A673 (cell line): ENCODE measurements at regions of chr12 and their contacts with region 1.

Region 1: DNA sequence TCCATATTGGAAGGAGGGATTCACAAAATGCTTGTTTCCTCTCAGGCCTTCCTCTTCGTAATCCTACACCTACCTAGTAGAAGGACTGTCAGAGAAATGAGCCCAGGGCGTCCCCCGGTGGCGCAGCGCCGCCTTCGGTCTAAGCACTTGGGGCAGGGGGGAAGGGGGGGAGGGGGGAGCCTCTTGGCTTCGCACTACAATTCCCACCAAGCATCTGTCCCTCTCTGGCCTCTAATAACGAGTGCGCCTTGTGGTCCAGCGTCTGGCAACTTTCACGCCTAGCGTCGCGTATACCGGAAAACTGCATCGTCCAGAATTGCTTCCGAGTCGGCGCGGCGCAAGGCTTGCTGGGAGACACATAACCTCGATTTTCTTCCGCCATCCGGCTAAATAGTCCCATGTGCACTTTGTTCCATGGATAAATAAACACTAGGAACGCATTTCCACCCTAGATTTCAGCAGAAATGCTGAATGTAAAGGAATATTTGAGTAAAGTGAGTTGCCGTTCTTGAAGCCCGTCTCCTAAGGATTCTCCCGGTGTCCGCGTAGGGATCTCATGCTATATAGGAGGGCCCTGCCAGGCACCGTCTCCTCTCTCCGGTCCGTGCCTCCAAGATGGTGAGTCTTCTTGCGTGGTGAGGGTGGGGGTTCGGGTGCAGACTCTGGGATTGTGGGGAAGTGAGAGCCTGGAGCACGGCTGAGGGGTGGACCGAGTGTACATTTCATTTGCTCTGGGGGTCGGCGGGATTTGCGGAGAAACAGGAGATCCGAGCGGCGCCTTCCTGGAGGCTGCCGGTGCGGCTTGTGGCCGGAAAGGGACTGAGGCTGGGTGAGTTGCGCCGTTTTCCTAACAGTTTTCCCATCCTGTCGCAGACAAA is at the start of gene RPS26:
- DNase-seq: peak; percentile 100
- H3K4me3 ChIP-seq: peak within 1 kb of the TSS; percentile 73
- H3K27ac ChIP-seq: peak within 1 kb of the TSS; percentile 97
- H3K4me1 ChIP-seq: peaks cover 40% of the 10 kb centered on the region
- H3K27me3 ChIP-seq: no peaks in the 10 kb centered on the region
- CTCF ChIP-seq: peak; percentile 56
- total RNA-seq, gene RPS26: 51.9 and 69.9 TPM in 2 replicates

Region 2: GRCh38 chr12:54134850-54135249 is 1906.9 kb before region 1 on chr12:
- CTCF ChIA-PET with region 1: no interaction called
- POLR2A ChIA-PET with region 1: interaction called, 11 read pairs
- intact Hi-C with region 1: no loop called
- DNase-seq: no peak
- H3K4me3 ChIP-seq: no peak overlapping the region
- H3K27ac ChIP-seq: no peak overlapping the region
- H3K4me1 ChIP-seq: peaks cover 4% of the 10 kb centered on the region
- H3K27me3 ChIP-seq: no peaks in the 10 kb centered on the region
- CTCF ChIP-seq: peak; percentile 56

Region 3: GRCh38 chr12:55817346-55818139 is 224.2 kb before region 1 on chr12 and contains the starts of genes ORMDL2 and SARNP:
- CTCF ChIA-PET with region 1: no interaction called
- POLR2A ChIA-PET with region 1: no interaction called
- intact Hi-C with region 1: loop called (anchors 5 kb)
- DNase-seq: peak; percentile 100
- H3K4me3 ChIP-seq: peak within 1 kb of the TSS; percentile 71
- H3K27ac ChIP-seq: peak within 1 kb of the TSS; percentile 75
- H3K4me1 ChIP-seq: peaks cover 17% of the 10 kb centered on the region
- H3K27me3 ChIP-seq: no peaks in the 10 kb centered on the region
- CTCF ChIP-seq: no peak
- total RNA-seq, gene ORMDL2: 32.3 and 35.4 TPM in 2 replicates
- total RNA-seq, gene SARNP: 104 and 115 TPM in 2 replicates

Region 4: GRCh38 chr12:55996715-55997534 is 44.9 kb before region 1 on chr12 and contains the start of gene SUOX:
- CTCF ChIA-PET with region 1: interaction called, 5 read pairs
- POLR2A ChIA-PET with region 1: no interaction called
- intact Hi-C with region 1: loop called (anchors 5 kb)
- DNase-seq: peak; percentile 59
- H3K4me3 ChIP-seq: peak within 1 kb of the TSS; percentile 42
- H3K27ac ChIP-seq: no peak within 1 kb of the TSS
- H3K4me1 ChIP-seq: peaks cover 3% of the 10 kb centered on the region
- H3K27me3 ChIP-seq: no peaks in the 10 kb centered on the region
- CTCF ChIP-seq: no peak
- total RNA-seq, gene SUOX: 2.2 and 5.0 TPM in 2 replicates

Region 5: GRCh38 chr12:56117778-56118687 is 76.2 kb after region 1 on chr12 and contains the start of gene ZC3H10:
- CTCF ChIA-PET with region 1: no interaction called
- POLR2A ChIA-PET with region 1: no interaction called
- intact Hi-C with region 1: loop called (anchors 5 kb)
- DNase-seq: peak; percentile 99
- H3K4me3 ChIP-seq: peak within 1 kb of the TSS; percentile 71
- H3K27ac ChIP-seq: peak within 1 kb of the TSS; percentile 95
- H3K4me1 ChIP-seq: peaks cover 13% of the 10 kb centered on the region
- H3K27me3 ChIP-seq: no peaks in the 10 kb centered on the region
- CTCF ChIP-seq: peak; percentile 61; the same call in 1 of the 2 replicates
- total RNA-seq, gene ZC3H10: 11.8 and 14.4 TPM in 2 replicates